ENCODE measurements at regions of chr1 and their contacts with region 1.

Region 1: GRCh38 chr1:108559215-108560186 is at the start of gene EEIG2:
- DNase-seq: peak; percentile 94 to 96 (median 96)
- ATAC-seq: peak; percentile 84
- H3K4me3 ChIP-seq: peak within 1 kb of the TSS; percentile 57
- H3K27ac ChIP-seq: peak within 1 kb of the TSS; percentile 78
- H3K4me1 ChIP-seq: peaks cover 25 to 51% of the 10 kb centered on the region in 2 experiments
- H3K27me3 ChIP-seq: no peaks in the 10 kb centered on the region
- CTCF ChIP-seq: peak; percentile 75 to 91 (median 84)
- EP300 ChIP-seq: peak; percentile 41
- POLR2A ChIP-seq: no peak; the same call in 1 of the 2 replicates
- RAD21 ChIP-seq: peak; percentile 42 to 49
- polyA plus RNA-seq, gene EEIG2: 6.1 to 8.0 TPM

Region 2: DNA sequence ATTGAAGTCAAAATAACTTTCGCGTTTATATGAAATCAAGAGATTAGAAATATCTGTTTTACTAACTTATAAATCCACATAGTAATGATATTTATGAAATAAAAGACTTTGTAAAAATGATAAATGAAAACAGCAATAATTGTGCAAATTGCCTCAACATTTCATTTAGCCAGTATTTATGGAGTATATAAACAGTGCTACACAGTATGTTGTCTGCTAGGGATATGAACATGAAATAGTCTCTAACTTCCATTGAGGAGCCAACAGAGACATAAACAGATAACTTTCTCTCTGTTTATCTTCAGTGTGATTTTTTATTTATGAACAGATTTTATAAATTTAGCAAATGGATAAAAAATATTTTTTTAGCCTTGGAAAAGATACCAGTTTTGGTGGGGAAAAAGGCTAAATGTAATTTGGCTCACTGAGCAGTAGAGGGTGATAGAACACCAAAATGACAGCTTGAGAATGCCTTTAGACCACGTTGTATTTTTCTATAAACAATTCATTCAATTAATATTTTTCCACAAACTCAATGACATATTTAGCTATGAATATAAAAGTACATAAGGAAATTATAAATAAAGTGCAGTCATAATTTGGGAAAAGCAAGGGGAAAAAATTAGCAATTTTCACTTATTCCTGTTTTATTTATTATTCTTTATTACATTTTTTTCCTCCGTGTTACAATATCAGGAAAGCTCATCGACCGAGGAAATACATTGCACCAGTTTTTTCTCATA is 47.1 kb before region 1 on chr1:
- CTCF ChIA-PET with region 1: interaction called, 69 read pairs
- POLR2A ChIA-PET with region 1: interaction called, 12 read pairs
- in situ Hi-C with region 1: loop called (anchors 5 kb)
- intact Hi-C with region 1: loop called (anchors 1 kb)
- DNase-seq: peak; percentile 31 to 68 (median 48)
- ATAC-seq: peak; percentile 87
- H3K4me3 ChIP-seq: no peak overlapping the region
- H3K27ac ChIP-seq: no peak overlapping the region
- H3K4me1 ChIP-seq: no peaks in the 10 kb centered on the region
- H3K27me3 ChIP-seq: no peaks in the 10 kb centered on the region
- CTCF ChIP-seq: peak; percentile 77 to 99 (median 81)
- EP300 ChIP-seq: no peak
- POLR2A ChIP-seq: no peak
- RAD21 ChIP-seq: peak; percentile 100

Region 3: DNA sequence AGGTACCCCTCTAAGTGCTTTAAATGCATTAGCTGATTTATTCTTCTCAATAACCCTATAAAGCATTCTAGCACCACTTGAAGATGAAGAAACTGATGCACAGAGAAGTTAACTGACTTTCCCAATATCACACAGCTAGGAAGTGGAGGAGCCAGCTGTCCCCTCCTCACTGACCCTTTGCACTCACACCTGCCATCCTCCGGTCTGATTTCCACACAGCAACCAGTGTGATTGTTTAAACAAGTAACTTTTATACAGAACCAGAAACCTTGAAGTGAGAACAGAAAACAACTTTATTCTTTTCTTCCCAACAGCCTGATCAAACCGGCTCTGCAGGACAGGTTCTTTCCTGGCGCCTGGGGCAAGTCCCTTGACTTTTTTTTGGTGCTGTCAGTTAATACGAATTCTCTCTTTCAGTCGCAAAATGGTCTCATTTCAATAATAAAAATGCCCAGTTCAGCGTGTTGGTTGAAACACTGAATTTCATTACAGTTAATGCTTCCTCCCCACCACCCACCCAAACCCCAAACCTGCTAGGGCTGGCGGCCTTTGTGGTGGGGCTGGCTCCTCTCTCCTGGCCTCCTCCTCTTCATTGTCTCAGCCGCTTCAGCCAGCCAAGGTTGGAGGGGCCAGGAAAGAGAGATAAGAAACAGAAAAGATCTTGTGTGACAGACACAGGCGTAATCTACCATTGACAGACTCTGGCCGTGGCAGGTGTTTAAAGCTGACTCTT is 26.0 kb before region 1 on chr1:
- CTCF ChIA-PET with region 1: no interaction called
- POLR2A ChIA-PET with region 1: interaction called, 23 read pairs
- in situ Hi-C with region 1: no loop called
- intact Hi-C with region 1: loop called (anchors 2 kb)
- DNase-seq: peak; percentile 85 to 97 (median 88)
- ATAC-seq: peak; percentile 90
- H3K4me3 ChIP-seq: 0 out of 2 replicates have a peak overlapping the region, but pooled peaks have one; percentile 3
- H3K27ac ChIP-seq: peak overlapping the region; percentile 49
- H3K4me1 ChIP-seq: peaks cover 23 to 31% of the 10 kb centered on the region in 2 experiments; a peak in 4 of 5 replicates
- H3K27me3 ChIP-seq: no peaks in the 10 kb centered on the region
- CTCF ChIP-seq: peak in 2 of 3 experiments; percentile 11 to 18; a peak in 1 of 6 replicates
- EP300 ChIP-seq: peak; percentile 96
- POLR2A ChIP-seq: no peak
- RAD21 ChIP-seq: no peak; a peak in 1 of 4 replicates

Region 4: GRCh38 chr1:108570128-108570527 is 10.6 kb after region 1 on chr1:
- CTCF ChIA-PET with region 1: no interaction called
- POLR2A ChIA-PET with region 1: interaction called, 12 read pairs
- in situ Hi-C with region 1: no loop called
- intact Hi-C with region 1: no loop called
- DNase-seq: peak in 2 of 4 experiments; percentile 63 to 66
- ATAC-seq: peak; percentile 99
- H3K4me3 ChIP-seq: no peak overlapping the region
- H3K27ac ChIP-seq: no peak overlapping the region
- H3K4me1 ChIP-seq: peaks cover 0 to 17% of the 10 kb centered on the region in 2 experiments; a peak in 2 of 5 replicates
- H3K27me3 ChIP-seq: no peaks in the 10 kb centered on the region
- CTCF ChIP-seq: peak; percentile 67 to 74 (median 71)
- EP300 ChIP-seq: no peak
- POLR2A ChIP-seq: no peak
- RAD21 ChIP-seq: peak; percentile 56 to 81

Region 5: GRCh38 chr1:108897865-108898720 is 338.6 kb after region 1 on chr1:
- CTCF ChIA-PET with region 1: no interaction called
- POLR2A ChIA-PET with region 1: no interaction called
- in situ Hi-C with region 1: no loop called
- intact Hi-C with region 1: loop called (anchors 5 kb)
- DNase-seq: peak in 2 of 4 experiments; percentile 56 to 72
- ATAC-seq: peak; percentile 91
- H3K4me3 ChIP-seq: no peak overlapping the region
- H3K27ac ChIP-seq: no peak overlapping the region
- H3K4me1 ChIP-seq: no peaks in the 10 kb centered on the region
- H3K27me3 ChIP-seq: no peaks in the 10 kb centered on the region
- CTCF ChIP-seq: peak; percentile 61 to 94 (median 67); a peak in 5 of 6 replicates
- EP300 ChIP-seq: no peak
- POLR2A ChIP-seq: no peak
- RAD21 ChIP-seq: peak; percentile 89 to 96

Measured in K562 (cell line).